Activated CD4-positive, alpha-beta T cell treated with anti-CD3 and anti-CD28 coated beads, Interleukin-2, amount 10 ng/mL, durations not matched to agents 24 days and 14 days (primary cell): ENCODE measurements at regions of chr10 and their contacts with region 1.

Region 1: GRCh38 chr10:101228153-101228973 is 900 bp downstream of the LBX1 start:
- DNase-seq: no peak
- H3K4me3 Mint-ChIP-seq: peak overlapping the region; percentile 21
- H3K27ac Mint-ChIP-seq: peak overlapping the region; percentile 76
- H3K4me1 Mint-ChIP-seq: peaks cover 17% of the 10 kb centered on the region
- H3K27me3 Mint-ChIP-seq: peaks cover 71% of the 10 kb centered on the region

Region 2: GRCh38 chr10:99234041-99234790 is 1994.1 kb before region 1 on chr10:
- intact Hi-C with region 1: loop called (anchors 10 kb)
- DNase-seq: peak; percentile 81
- H3K4me3 Mint-ChIP-seq: peak overlapping the region; percentile 71
- H3K27ac Mint-ChIP-seq: peak overlapping the region; percentile 25
- H3K4me1 Mint-ChIP-seq: peaks cover 11% of the 10 kb centered on the region
- H3K27me3 Mint-ChIP-seq: peaks cover 83% of the 10 kb centered on the region

Region 3: DNA sequence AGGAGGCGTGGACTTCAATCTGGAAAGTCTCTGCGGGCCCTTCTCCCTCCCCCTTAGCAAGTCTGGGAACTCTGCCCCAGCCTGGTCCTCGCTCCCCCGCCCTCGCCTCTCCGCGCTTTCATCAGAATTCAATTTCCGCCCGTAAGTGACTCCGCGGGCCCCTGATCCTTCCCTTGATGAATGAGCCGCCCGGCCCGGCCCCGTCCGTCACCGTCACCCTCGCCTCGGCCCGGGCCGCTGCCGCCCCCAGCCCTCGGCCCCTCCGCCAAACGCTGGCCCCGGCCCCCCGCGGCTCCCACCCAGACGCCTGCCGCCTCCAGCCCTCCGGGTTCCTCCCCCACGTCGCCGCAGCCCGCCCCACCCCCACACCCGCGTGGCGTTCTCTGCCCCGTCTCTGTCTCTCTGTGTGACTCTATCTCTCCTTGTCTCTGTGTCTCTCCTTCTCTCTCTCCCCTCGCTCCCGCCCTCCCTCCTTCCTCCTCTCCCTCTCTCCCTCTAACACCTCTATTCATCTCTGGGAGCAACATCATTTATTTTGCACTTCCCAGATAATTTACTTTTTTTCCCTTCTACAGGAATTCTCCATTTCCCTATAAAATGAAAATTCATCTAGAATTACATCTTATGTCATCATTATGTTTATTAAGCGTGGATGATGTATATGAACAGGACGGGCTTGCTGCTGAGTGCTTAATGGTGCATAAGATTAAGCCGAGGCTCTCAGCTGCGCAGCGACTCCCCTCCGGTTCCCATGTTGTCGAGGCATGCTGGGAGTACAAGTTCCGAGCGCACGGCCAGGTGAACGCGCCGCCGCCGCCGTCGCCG is 574.2 kb before region 1 on chr10:
- intact Hi-C with region 1: loop called (anchors 10 kb)
- DNase-seq: peak; percentile 72
- H3K4me3 Mint-ChIP-seq: peak overlapping the region; percentile 77
- H3K27ac Mint-ChIP-seq: peak overlapping the region; percentile 22
- H3K4me1 Mint-ChIP-seq: peaks cover 27% of the 10 kb centered on the region
- H3K27me3 Mint-ChIP-seq: peaks cover 66% of the 10 kb centered on the region

Region 4: GRCh38 chr10:100827819-100828737 is 400.3 kb before region 1 on chr10:
- intact Hi-C with region 1: loop called (anchors 2 kb)
- DNase-seq: peak; percentile 77
- H3K4me3 Mint-ChIP-seq: peak overlapping the region; percentile 85
- H3K27ac Mint-ChIP-seq: peak overlapping the region; percentile 52
- H3K4me1 Mint-ChIP-seq: peaks cover 24% of the 10 kb centered on the region
- H3K27me3 Mint-ChIP-seq: peaks cover 79% of the 10 kb centered on the region

Region 5: GRCh38 chr10:101238732-101239105 is 10.4 kb after region 1 on chr10:
- intact Hi-C with region 1: loop called (anchors 1 kb)
- DNase-seq: peak; percentile 73
- H3K4me3 Mint-ChIP-seq: no peak overlapping the region
- H3K27ac Mint-ChIP-seq: no peak overlapping the region
- H3K4me1 Mint-ChIP-seq: peaks cover 6% of the 10 kb centered on the region
- H3K27me3 Mint-ChIP-seq: peaks cover 67% of the 10 kb centered on the region